ENCODE measurements at regions of chr6 and their contacts with region 1.

Region 1: DNA sequence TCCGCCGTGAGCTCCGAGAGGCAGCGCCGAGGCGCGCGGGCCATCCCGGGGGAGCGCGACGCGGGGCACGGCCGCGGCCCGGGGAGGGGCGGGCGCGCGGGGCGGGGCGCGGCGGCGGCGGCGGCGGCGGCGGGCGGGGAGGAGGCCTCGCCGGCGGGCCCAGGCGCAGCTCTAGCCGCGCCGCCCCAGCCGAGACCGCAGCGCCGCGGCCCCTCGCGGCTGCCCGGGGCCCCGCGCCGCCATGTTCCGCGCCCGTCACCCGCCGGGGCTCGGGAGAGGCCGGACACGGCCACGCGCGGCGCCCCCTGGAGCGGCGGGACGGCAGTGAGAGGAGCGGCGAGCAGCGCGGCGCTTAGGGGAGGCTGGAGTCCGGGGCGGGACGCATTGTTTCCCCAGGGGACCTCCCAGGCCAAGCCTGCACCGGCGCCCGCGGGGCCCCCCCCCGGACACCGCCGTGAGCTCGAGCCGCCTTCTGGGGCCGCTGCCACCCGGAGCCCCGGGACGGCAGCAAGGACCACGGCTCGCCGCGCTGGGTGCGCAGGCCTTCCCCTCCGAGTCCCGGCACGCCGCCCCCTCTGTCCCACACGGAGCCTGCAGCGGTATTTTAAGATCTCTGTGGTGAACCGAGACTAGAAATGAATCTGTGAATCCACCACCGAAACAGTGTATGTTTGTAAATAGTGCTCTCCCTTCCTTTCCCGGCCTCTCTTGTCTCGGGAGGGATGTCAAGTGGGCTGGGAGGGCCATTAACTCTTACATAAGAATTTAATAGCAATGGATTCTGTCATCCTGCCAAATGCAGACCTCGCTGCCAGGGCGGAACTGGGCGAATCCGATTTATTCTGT is at the start of gene KIF13A:
- DNase-seq: peak; percentile 75 to 81
- ATAC-seq: peak; percentile 67 to 86 (median 78)
- H3K4me3 ChIP-seq: peak within 1 kb of the TSS; percentile 74 to 94 (median 86)
- H3K27ac ChIP-seq: peak within 1 kb of the TSS; percentile 94 to 99 (median 98)
- H3K4me1 ChIP-seq: peaks cover 0 to 44% (median 39%) of the 10 kb centered on the region in 9 donors
- H3K27me3 ChIP-seq: no peaks in the 10 kb centered on the region
- CTCF ChIP-seq: peak in 7 of 9 donors; percentile 10 to 61 (median 42)
- total RNA-seq, gene KIF13A: 48.0 to 198 (median 118) TPM

Region 2: DNA sequence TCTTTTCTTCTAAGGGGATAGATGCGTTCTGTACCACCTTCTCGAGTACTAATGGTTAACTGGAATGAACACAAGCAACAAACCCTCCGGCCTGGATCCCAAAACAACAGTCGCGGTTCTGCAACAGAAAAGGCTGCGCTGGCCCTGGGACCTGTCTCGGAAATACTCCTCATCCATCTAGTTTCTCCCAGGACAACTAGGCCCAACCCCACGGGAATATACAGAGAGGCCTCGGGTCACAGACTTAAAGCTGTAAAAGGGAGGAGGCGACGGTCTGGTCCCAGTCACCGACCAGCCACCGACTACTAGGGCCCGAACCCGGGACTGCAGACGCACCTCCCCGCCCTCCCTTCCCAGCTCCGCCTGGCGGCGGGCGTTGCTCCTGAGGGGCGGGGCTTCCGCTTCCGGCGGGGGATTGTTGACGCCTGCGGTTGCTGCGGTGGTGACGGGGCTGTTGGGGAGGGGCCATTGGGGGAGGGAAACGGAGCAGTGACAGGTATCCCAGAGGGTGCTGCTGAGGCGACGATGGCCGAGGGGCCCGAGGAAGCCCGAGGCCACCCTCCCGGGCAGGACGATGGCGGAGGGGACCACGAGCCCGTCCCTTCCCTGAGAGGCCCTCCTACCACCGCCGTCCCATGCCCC is 387.8 kb before region 1 on chr6 and contains the start of gene FAM8A1:
- intact Hi-C with region 1: loop called in 1 of 10 experiments (anchors 10 kb)
- DNase-seq: peak; percentile 96 to 97
- ATAC-seq: peak; percentile 98 to 99 (median 99)
- H3K4me3 ChIP-seq: peak within 1 kb of the TSS; percentile 51 to 99 (median 84)
- H3K27ac ChIP-seq: peak within 1 kb of the TSS; percentile 78 to 98 (median 94)
- H3K4me1 ChIP-seq: peaks cover 4 to 34% (median 11%) of the 10 kb centered on the region in 9 donors
- H3K27me3 ChIP-seq: no peaks in the 10 kb centered on the region
- CTCF ChIP-seq: peak; percentile 21 to 78 (median 55)
- total RNA-seq, gene FAM8A1: 14.5 to 23.2 (median 16.5) TPM

Region 3: GRCh38 chr6:17820055-17820454 is 167.7 kb before region 1 on chr6:
- intact Hi-C with region 1: loop called in 1 of 10 experiments (anchors 2 kb)
- DNase-seq: no peak
- ATAC-seq: peak in 4 of 8 donors; percentile 31 to 61 (median 52)
- H3K4me3 ChIP-seq: no peak overlapping the region
- H3K27ac ChIP-seq: no peak overlapping the region
- H3K4me1 ChIP-seq: no peaks in the 10 kb centered on the region
- H3K27me3 ChIP-seq: no peaks in the 10 kb centered on the region
- CTCF ChIP-seq: peak in 1 of 9 donors; percentile 15

Region 4: DNA sequence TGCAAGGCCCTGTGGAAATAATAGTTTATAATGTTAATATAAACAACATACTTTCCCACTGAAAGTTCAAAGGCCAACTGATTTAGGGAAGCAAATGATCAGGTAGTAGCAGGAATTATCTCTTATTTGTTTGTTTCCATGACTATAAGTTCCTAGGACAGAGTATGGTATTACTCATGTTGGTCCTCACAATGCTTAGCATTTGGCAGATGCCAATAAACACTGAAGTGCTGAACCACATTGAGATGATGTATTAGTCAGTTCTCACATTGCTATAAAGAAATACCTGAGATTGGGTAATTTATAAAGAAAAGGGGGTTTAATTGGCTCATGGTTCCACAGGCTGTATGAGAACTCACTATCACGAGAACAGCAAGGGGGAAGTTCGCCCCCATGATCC is 151.5 kb before region 1 on chr6:
- intact Hi-C with region 1: loop called in 4 of 10 experiments (anchors 5 to 10 kb)
- DNase-seq: no peak
- ATAC-seq: no peak
- H3K4me3 ChIP-seq: no peak overlapping the region
- H3K27ac ChIP-seq: no peak overlapping the region
- H3K4me1 ChIP-seq: peaks cover 0 to 8% (median 5%) of the 10 kb centered on the region in 9 donors
- H3K27me3 ChIP-seq: no peaks in the 10 kb centered on the region
- CTCF ChIP-seq: no peak

Region 5: GRCh38 chr6:17865798-17866725 is 121.7 kb before region 1 on chr6:
- intact Hi-C with region 1: loop called in 6 of 10 experiments (anchors 2 to 10 kb)
- DNase-seq: peak; percentile 40 to 74
- ATAC-seq: peak; percentile 61 to 96 (median 90)
- H3K4me3 ChIP-seq: no peak overlapping the region
- H3K27ac ChIP-seq: peak overlapping the region in 9 of 10 donors; percentile 20 to 79 (median 63)
- H3K4me1 ChIP-seq: peaks cover 14 to 83% (median 69%) of the 10 kb centered on the region in 9 donors
- H3K27me3 ChIP-seq: no peaks in the 10 kb centered on the region
- CTCF ChIP-seq: no peak

Region 6: DNA sequence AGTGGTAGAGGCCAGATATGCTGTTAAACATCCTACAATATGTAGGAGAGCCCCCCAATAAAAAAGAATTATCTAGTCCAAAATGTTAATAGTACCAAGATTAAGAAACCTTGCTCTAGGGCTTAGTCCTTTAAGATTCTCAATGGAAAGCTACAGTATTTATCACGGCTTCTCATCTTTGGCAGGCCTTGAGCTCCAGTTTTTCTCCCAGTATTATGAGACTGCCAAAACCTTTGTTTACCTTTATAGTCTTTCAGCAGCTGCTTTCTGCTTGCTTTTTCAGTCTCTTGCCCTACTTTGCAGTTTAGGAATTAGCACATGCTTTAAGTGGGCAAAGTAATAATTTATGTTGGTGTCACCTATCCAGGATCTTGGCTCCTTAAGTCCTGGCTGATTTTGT is 74.9 kb after region 1 on chr6:
- intact Hi-C with region 1: no loop called
- DNase-seq: no peak
- ATAC-seq: no peak
- H3K4me3 ChIP-seq: no peak overlapping the region
- H3K27ac ChIP-seq: no peak overlapping the region
- H3K4me1 ChIP-seq: no peaks in the 10 kb centered on the region
- H3K27me3 ChIP-seq: no peaks in the 10 kb centered on the region
- CTCF ChIP-seq: no peak

Region 7: GRCh38 chr6:18122124-18123093 is 134.6 kb after region 1 on chr6 and contains the start of gene NHLRC1:
- intact Hi-C with region 1: loop called in 8 of 10 experiments (anchors 1 to 10 kb)
- DNase-seq: peak; percentile 87 to 90
- ATAC-seq: peak; percentile 99 to 100 (median 99)
- H3K4me3 ChIP-seq: peak within 1 kb of the TSS; percentile 27 to 68 (median 61)
- H3K27ac ChIP-seq: peak within 1 kb of the TSS in 8 of 10 donors; percentile 18 to 64 (median 40)
- H3K4me1 ChIP-seq: peaks cover 3 to 21% (median 15%) of the 10 kb centered on the region in 9 donors
- H3K27me3 ChIP-seq: no peaks in the 10 kb centered on the region
- CTCF ChIP-seq: peak; percentile 86 to 96 (median 93)
- total RNA-seq, gene NHLRC1: 0.92 to 2.5 (median 1.6) TPM

Region 8: DNA sequence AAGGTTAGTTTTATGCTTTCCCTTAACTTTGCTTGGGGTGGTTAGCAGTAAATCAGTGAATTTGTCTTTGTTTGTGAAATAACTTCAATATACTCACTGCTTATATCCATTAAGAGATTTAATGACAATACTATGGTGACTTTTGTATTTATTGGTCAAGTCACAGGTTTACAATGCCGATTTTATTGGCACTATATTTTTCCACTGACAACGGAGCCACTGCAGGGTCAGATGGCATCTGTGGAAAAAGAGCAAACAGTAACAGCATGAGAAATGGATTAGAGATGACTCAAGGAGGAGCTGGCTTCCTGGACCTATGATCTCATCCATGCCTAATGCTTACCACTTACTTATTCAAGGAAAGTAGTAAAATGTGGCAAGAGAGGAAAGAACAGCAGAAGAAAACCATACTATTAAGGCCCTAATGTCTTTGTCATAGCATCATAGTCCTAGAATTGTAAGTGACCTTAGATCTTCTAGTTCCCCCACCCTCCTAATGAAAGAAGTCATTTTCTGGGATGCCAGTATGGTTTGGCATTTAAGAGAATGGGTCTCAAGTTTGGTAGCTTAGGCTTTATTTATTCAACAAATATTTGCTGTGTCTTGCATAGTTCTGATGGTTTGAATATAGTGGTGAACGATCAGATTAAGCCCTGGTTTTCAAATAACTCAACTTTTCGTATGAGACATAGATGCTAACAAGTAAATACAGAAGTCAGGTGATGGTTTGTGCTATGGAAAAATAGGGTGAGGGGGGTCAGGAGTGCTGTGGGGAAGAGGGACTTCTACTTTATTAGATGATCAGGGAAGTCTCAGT is 417.9 kb after region 1 on chr6:
- intact Hi-C with region 1: no loop called
- DNase-seq: no peak
- ATAC-seq: peak in 1 of 8 donors; percentile 50
- H3K4me3 ChIP-seq: no peak overlapping the region
- H3K27ac ChIP-seq: peak overlapping the region in 1 of 10 donors; percentile 40
- H3K4me1 ChIP-seq: peaks cover 0 to 50% (median 6%) of the 10 kb centered on the region in 9 donors
- H3K27me3 ChIP-seq: no peaks in the 10 kb centered on the region
- CTCF ChIP-seq: no peak

Measured in heart right ventricle (tissue), 16 donors.